ENCODE measurements at regions of chr19 and their contacts with region 1.

Region 1: DNA sequence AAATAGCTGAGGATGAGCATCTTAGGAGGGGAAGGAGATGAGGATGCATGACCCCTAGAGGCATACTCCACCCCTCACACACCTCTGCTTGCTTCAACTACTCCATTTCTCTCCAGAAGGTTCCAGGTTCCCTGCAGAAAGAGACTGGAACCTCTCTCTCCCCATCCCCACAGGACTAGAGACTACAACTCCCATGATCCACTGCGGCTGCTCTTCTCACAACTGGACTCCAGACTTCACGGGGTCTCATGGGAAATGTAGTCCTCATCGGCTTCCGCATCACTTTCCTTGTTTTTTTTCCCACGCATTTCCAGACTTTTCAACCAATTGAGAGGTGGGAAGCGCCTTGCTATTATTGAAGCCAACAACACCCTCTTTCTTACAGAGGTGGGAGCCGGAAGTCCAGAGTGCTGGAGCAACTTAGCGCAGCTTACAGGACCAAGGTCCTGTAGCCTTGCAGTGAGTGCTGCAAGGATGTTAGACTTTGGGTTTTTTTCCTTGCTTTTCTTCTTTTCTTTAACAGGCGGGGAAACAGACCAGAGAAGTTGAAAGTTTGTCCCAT is 13.9 kb upstream of the CACNG6 start:
- DNase-seq: peak; percentile 76 to 77
- ATAC-seq: peak; percentile 69 to 81
- H3K4me3 ChIP-seq: peak overlapping the region; percentile 48 to 59 (median 53)
- H3K27ac ChIP-seq: peak overlapping the region; percentile 49 to 72 (median 68)
- H3K4me1 ChIP-seq: peaks cover 13 to 18% of the 10 kb centered on the region in 2 donors
- H3K27me3 ChIP-seq: peaks cover 0 to 19% (median 5%) of the 10 kb centered on the region in 3 donors
- CTCF ChIP-seq: no peak
- POLR2A ChIP-seq: no peak

Region 2: DNA sequence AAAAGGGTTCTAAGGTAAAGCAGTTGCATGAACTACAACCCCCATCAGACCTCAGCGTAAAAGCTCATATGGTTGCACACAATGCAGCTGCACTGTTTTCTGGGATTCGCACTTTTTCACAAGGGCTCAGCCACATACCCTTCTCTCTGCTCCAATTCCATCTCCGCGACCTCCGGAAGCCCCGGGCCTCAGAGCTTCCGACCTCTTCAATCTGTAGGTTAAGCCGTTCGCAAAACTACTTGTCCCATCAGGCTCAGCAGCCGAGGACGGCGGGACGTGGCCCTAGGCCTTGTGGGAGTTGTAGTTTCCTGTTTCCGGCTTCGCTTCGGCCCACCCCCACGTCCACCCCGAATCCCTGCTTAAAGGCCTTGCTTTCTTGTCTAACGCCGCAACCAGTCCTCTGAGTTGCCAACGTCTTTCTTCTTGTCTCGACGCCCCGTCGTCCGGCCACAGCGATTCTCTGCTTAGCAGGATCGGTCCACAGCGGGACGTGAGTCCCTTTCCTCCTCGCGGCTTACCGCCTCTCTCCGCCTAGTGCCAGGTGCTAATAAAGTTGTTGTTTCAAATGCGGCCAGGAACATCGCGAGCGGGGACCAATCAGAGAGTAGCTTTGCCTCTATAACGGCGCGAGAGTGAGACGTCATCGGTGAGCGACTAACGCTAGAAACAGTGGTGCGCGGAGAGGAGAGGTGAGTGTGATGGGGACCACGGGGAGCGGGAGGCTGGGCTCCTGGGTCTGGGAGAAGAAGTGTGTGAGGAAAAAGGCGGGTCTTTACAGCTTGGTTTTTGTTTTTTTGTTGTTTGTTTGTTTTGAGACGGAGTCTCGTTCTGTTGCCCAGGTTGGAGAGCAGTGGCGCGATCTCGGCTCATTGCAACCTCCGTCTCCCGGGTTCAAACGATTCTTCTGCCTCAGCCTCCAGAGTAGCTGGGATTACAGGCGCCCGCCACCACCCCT is 137.9 kb after region 1 on chr19 and contains the starts of genes PRPF31 and TFPT:
- in situ Hi-C with region 1: loop called in 1 of 4 experiments (anchors 10 kb)
- intact Hi-C with region 1: loop called (anchors 1 kb)
- DNase-seq: peak; percentile 94 to 95
- ATAC-seq: peak; percentile 95 to 97
- H3K4me3 ChIP-seq: peak within 1 kb of the TSS; percentile 69 to 98 (median 91)
- H3K27ac ChIP-seq: peak within 1 kb of the TSS; percentile 87 to 99 (median 90)
- H3K4me1 ChIP-seq: peaks cover 21% of the 10 kb centered on the region in 2 donors
- H3K27me3 ChIP-seq: no peaks in the 10 kb centered on the region
- CTCF ChIP-seq: peak in 1 of 5 experiments; percentile 24
- POLR2A ChIP-seq: peak; percentile 63 to 76
- total RNA-seq, gene PRPF31: 26.6 to 39.4 (median 37.2) TPM
- total RNA-seq, gene TFPT: 7.5 to 18.1 (median 17.5) TPM

Region 3: DNA sequence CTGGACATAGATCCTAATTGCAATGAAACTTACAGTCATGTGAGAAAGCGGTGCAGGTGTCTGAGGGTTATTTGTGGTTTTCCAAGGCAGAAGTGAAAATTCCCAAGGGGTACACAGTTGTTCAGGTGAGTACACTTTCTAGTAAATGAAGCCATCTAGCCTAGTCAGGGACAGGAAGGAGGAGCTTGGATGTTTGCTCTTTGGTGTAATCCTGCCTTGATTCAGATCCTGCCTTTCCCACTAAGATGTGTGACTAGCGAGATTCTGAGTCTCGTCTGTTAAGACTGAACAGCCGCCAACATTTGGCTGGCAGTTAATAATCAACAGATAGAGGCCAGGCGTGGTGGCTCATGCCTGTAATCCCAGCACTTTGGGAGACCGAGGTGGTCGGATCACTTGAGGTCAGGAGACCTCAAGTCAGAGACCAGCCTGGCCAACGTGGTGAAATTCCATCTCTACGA is 225.7 kb after region 1 on chr19:
- in situ Hi-C with region 1: no loop called
- intact Hi-C with region 1: loop called (anchors 5 kb)
- DNase-seq: no peak
- ATAC-seq: no peak
- H3K4me3 ChIP-seq: peak overlapping the region in 2 of 4 donors; percentile 76 to 78
- H3K27ac ChIP-seq: peak overlapping the region; percentile 63 to 95 (median 92)
- H3K4me1 ChIP-seq: peaks cover 60 to 63% of the 10 kb centered on the region in 2 donors
- H3K27me3 ChIP-seq: no peaks in the 10 kb centered on the region
- CTCF ChIP-seq: no peak
- POLR2A ChIP-seq: no peak

Measured in gastrocnemius medialis (tissue), 4 donors.